Activated naive CD4-positive, alpha-beta T cell treated with anti-CD3 and anti-CD28 coated beads for 36 hours (primary cell): ENCODE measurements at regions of chr17 and their contacts with region 1.

Region 1: GRCh38 chr17:63946440-63947367 is 14.6 kb upstream of the CD79B start:
- DNase-seq: peak; percentile 74
- H3K4me3 Mint-ChIP-seq: peak overlapping the region; percentile 28
- H3K27ac Mint-ChIP-seq: no peak overlapping the region
- H3K4me1 Mint-ChIP-seq: peaks cover 8% of the 10 kb centered on the region
- H3K27me3 Mint-ChIP-seq: no peaks in the 10 kb centered on the region

Region 2: DNA sequence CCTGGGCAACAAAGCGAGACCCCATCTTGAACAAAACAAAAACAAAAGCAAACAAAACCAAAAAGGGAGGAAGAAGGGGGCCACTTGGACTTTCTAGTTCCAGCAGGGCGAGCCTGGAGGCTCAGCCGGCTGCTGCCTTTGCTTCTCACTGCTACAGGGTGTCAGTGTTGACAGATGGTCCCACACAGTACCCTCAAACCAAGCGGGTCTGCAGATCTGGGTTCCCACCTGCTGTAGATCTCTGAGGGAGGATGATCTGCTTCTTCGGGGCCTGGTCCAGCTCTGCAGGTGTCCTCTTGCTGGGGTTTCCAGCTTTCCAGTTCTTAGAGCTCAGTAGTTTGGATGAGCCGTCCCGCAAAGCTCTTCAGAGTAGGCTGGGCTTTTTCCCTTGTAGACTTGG is 42.4 kb before region 1 on chr17:
- CTCF ChIA-PET with region 1: interaction called, 13 read pairs
- intact Hi-C with region 1: no loop called
- DNase-seq: no peak
- H3K4me3 Mint-ChIP-seq: no peak overlapping the region
- H3K27ac Mint-ChIP-seq: no peak overlapping the region
- H3K4me1 Mint-ChIP-seq: peaks cover 6% of the 10 kb centered on the region
- H3K27me3 Mint-ChIP-seq: no peaks in the 10 kb centered on the region

Region 3: DNA sequence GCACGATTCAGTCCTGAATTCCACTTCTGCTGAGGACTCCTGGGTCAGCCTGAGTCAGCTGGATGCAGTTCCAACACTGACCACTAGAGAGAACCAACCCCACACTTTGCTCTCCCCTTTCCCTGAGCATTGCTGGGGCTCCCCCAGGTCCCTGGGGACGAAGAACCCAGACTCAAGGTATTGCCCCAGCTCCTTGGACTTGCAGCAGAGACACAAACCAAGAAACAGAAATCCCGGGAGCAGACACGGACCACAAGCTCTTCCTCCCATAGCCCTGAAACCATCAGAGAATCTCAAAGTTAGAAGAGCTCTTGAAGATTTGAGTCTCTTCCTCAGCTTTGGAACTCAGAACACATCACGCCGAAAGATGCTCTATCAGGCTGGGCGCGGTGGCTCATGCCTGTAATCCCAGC is 27.4 kb before region 1 on chr17:
- CTCF ChIA-PET with region 1: interaction called, 76 read pairs
- intact Hi-C with region 1: loop called (anchors 1 kb)
- DNase-seq: peak; percentile 86
- H3K4me3 Mint-ChIP-seq: no peak overlapping the region
- H3K27ac Mint-ChIP-seq: no peak overlapping the region
- H3K4me1 Mint-ChIP-seq: peaks cover 5% of the 10 kb centered on the region
- H3K27me3 Mint-ChIP-seq: no peaks in the 10 kb centered on the region

Region 4: DNA sequence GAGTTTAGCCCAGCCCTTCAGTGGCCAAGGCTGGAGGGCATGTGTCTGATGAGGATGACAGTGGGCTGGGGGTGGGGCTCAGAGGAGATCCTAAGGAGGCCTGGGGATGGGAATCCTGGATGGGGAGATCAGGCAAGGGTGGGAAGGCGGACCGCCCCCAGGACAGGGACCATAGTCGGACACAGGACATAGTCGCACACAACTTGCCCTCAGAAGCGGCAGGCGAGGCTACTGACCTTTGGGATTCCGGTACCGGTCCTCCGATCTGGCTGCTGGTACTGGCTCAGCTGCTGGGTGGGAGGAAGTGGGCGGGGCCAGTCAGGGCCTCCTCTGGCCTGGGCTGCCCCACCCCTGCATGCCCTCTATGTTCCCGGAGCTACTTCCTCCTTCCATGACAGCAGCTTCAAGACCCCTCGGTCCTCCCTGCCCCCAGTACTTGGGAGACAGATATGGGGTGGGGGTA is 15.6 kb before region 1 on chr17:
- CTCF ChIA-PET with region 1: interaction called, 23 read pairs
- intact Hi-C with region 1: loop called (anchors 1 kb)
- DNase-seq: peak; percentile 68
- H3K4me3 Mint-ChIP-seq: peak overlapping the region; percentile 93
- H3K27ac Mint-ChIP-seq: peak overlapping the region; percentile 76
- H3K4me1 Mint-ChIP-seq: peaks cover 17% of the 10 kb centered on the region
- H3K27me3 Mint-ChIP-seq: no peaks in the 10 kb centered on the region

Region 5: GRCh38 chr17:63967953-63968352 is 21.2 kb after region 1 on chr17:
- CTCF ChIA-PET with region 1: interaction called, 39 read pairs
- intact Hi-C with region 1: no loop called
- DNase-seq: peak; percentile 28
- H3K4me3 Mint-ChIP-seq: no peak overlapping the region
- H3K27ac Mint-ChIP-seq: no peak overlapping the region
- H3K4me1 Mint-ChIP-seq: peaks cover 14% of the 10 kb centered on the region
- H3K27me3 Mint-ChIP-seq: no peaks in the 10 kb centered on the region

Region 6: DNA sequence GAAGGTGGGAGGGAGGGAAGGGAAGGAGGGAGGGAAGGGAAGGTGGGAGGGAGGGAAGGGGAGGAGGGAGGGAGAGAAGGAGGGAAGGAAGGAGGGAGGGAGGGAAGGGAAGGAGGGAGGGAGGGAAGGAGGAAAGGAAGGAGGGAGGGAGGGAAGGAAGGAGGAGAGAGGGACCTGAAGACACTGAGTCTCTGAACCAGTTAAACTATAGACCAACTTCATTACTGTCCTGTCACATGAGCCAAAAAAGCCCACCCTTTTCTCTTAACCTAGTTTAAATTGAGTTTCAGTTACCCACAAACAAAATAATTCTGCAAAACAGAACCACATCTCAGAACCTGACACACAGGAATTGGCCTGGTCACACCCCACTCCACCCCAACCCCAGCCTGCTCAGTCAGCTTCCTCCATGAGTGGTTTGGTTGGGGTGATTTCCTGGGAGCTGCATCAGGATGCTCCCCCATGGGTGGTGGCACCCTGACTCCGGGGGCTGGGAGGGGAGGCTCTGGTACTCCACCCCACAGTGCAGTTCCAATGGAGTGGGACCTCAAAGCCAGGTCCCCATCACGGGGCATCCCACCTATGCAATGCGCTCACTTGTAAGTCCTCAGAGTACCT is 46.8 kb after region 1 on chr17:
- CTCF ChIA-PET with region 1: interaction called, 10 read pairs
- intact Hi-C with region 1: loop called (anchors 5 kb)
- DNase-seq: no peak
- H3K4me3 Mint-ChIP-seq: no peak overlapping the region
- H3K27ac Mint-ChIP-seq: no peak overlapping the region
- H3K4me1 Mint-ChIP-seq: peaks cover 29% of the 10 kb centered on the region
- H3K27me3 Mint-ChIP-seq: no peaks in the 10 kb centered on the region